ENCODE measurements at regions of chr9 and their contacts with region 1.

Region 1: DNA sequence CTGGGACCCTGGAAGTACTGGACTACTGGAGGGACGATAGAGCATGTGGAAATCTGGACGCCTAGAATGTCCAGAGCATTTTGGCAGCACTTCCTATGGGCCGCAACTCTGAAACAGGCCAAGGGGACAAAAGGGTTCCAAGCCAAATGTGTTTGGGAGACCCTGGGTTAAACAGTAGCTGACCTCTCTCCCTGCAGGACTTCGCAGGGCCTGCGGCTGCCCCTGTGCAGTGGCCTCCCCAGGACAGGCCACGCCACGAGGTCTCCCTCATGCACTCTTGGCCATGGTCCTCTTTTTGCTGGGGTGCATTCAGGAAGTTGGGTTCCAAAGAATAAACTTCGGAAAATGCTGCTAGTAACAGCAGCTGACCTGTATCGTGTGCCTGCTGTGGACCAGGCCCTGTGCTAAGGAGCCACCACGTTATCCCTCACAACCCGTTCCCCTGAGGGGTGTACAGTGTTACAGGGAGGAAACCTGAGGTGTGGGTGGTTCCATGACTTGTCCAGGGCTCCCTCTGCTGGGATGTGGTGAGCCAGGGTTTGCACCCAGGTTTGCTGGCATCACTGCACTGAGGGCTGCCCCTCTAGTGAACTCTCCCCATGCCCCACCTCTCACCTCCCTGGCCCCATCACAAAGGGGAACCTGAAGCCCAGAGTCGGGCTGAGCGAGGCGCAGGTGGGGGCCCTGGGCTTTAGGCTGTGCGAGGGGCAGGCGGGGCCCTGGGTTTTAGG is 79.4 kb downstream of the AMBP start:
- DNase-seq: no peak
- H3K4me3 ChIP-seq: no peak overlapping the region
- H3K27ac ChIP-seq: no peak overlapping the region
- H3K4me1 ChIP-seq: peaks cover 7 to 17% (median 9%) of the 10 kb centered on the region in 3 donors
- H3K27me3 ChIP-seq: no peaks in the 10 kb centered on the region
- CTCF ChIP-seq: no peak
- POLR2A ChIP-seq: no peak

Region 2: DNA sequence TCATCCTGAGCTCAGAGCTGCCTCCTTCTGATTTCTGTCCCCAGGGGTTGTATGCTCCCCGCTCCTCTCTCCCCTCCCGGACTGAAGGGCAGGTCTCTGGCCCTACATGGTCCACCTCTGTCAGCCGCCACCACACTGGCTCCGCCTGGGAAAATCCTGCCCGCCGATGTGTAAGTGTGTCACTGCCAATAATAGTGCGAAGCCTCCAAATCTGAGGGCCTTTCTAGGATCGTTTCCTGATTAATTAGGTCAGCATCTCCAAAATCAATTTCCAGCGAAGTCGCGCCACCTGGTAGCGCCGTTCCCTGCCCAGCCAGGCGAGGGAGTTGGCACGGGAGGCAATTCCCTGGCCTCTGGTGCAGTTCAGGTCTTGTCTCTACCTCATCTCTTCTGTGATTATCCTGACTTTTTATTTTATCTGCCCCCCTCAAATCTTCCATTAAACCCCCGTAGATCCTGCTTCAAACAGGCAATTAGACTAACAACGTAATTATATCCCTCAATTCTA is 49.1 kb before region 1 on chr9:
- intact Hi-C with region 1: loop called (anchors 5 kb)
- DNase-seq: no peak
- H3K4me3 ChIP-seq: no peak overlapping the region
- H3K27ac ChIP-seq: no peak overlapping the region
- H3K4me1 ChIP-seq: peaks cover 0 to 3% (median 3%) of the 10 kb centered on the region in 3 donors
- H3K27me3 ChIP-seq: no peaks in the 10 kb centered on the region
- CTCF ChIP-seq: no peak
- POLR2A ChIP-seq: no peak